Activated CD4-positive, alpha-beta memory T cell treated with anti-CD3 and anti-CD28 coated beads for 36 hours (primary cell): ENCODE measurements at regions of chr3 and their contacts with region 1.

Region 1: DNA sequence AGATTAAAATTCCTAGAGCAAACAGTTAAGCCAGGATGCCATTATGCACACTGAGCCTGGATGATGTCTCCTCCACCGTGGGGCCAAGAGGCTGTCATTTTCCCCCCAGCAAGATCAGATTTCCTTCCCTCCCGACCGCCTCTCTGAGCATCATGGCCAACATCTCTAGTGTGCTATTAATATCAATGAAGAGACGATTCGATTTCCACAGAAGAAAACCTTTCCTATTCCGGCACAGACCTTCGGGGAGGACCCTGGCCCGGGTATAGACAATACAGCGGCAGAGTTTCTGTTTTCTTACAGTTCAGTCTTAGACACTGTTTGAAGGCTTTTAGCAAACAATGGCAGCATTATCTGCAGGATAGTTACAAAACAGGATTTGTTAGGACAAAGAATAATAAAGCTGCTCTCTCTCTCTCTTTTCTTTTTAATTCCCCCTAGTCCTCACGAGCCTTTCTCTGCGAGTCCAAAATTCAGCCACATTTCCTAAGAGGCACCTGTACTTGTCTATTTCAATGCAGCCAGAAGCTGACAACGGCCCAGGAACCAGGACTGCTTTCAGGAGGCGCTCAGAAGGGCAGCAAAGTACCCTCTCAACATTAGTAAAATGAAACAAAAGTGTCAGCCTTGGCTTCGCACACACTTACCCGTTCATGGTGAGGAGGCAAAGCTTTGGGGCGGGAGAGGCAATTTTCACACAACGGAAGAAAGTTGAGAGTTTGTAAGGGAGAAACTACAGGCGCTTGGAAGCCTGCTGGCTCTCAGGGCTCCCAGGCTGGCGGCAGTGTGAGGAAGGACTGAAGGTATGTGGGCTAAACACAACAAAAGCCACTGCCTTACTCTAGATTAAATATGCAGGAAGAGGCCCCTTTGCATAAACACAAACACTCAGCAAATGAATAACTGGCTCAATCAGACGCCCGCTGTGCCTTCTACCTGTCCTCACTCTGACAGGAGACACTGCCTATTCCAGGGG is 278.0 kb downstream of the FOXP1 start:
- DNase-seq: peak; percentile 22
- H3K4me3 Mint-ChIP-seq: peak overlapping the region; percentile 77
- H3K27ac Mint-ChIP-seq: peak overlapping the region; percentile 87
- H3K4me1 Mint-ChIP-seq: peaks cover 86% of the 10 kb centered on the region
- H3K27me3 Mint-ChIP-seq: no peaks in the 10 kb centered on the region

Region 2: DNA sequence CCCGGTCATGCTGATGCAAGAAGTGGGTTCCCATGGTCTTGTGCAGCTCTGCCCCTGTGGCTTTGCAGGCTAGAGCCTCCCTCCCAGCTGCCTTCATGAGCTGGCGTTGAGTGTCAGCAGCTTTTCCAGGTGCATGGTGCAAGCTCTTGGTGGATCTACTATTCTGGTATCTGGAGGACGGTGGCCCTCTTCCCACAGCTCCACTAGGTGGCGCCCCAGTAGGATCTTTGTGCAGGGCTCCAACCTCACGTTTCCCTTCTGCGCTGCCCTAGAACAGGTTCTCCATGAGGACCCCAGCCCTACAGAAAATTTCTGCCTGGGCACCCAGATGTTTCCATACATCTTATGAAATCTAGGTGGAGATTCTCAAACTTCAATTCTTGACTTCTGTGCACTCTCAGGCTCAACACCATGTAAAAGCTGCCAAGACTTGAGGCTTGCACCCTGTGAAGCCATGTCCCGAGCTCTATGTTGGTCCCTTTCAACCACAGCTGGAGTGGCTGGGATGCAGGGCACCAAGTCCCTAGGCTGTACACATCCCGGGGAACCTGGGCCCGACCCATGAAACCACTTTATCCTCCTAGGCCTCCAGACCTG is 754.7 kb before region 1 on chr3:
- CTCF ChIA-PET with region 1: no interaction called
- POLR2A ChIA-PET with region 1: no interaction called
- intact Hi-C with region 1: loop called (anchors 2 kb)
- DNase-seq: peak; percentile 84
- H3K4me3 Mint-ChIP-seq: no peak overlapping the region
- H3K27ac Mint-ChIP-seq: no peak overlapping the region
- H3K4me1 Mint-ChIP-seq: no peaks in the 10 kb centered on the region
- H3K27me3 Mint-ChIP-seq: peaks cover 3% of the 10 kb centered on the region

Region 3: DNA sequence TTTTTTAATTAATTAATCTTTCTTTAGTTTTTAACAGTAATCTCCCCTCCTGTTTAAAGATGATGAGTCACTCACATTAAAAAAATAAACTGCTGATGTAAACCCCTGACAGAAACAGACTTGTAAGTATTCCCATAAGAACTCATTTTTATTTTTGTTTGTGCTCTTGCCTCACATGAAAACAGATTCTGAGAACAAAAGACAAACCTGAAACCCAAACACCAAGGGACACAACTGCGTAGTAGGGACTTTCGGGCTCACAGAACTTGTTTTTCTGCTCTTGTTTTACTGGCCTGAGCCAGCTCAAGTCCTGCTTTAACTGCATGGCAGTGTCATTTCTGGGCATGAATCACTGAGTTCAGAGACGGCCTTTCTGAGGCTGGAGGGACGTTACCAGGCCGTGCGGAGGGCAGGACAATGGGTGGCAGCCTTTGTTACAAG is 322.8 kb before region 1 on chr3:
- CTCF ChIA-PET with region 1: interaction called, 3 read pairs
- POLR2A ChIA-PET with region 1: no interaction called
- intact Hi-C with region 1: loop called (anchors 5 kb)
- DNase-seq: peak; percentile 70
- H3K4me3 Mint-ChIP-seq: peak overlapping the region; percentile 57
- H3K27ac Mint-ChIP-seq: peak overlapping the region; percentile 99
- H3K4me1 Mint-ChIP-seq: peaks cover 64% of the 10 kb centered on the region
- H3K27me3 Mint-ChIP-seq: no peaks in the 10 kb centered on the region

Region 4: GRCh38 chr3:71087143-71088018 is 218.1 kb before region 1 on chr3:
- CTCF ChIA-PET with region 1: interaction called, 3 read pairs
- POLR2A ChIA-PET with region 1: interaction called, 3 read pairs
- intact Hi-C with region 1: loop called (anchors 1 kb)
- DNase-seq: peak; percentile 62
- H3K4me3 Mint-ChIP-seq: peak overlapping the region; percentile 38
- H3K27ac Mint-ChIP-seq: peak overlapping the region; percentile 81
- H3K4me1 Mint-ChIP-seq: peaks cover 88% of the 10 kb centered on the region
- H3K27me3 Mint-ChIP-seq: no peaks in the 10 kb centered on the region

Region 5: DNA sequence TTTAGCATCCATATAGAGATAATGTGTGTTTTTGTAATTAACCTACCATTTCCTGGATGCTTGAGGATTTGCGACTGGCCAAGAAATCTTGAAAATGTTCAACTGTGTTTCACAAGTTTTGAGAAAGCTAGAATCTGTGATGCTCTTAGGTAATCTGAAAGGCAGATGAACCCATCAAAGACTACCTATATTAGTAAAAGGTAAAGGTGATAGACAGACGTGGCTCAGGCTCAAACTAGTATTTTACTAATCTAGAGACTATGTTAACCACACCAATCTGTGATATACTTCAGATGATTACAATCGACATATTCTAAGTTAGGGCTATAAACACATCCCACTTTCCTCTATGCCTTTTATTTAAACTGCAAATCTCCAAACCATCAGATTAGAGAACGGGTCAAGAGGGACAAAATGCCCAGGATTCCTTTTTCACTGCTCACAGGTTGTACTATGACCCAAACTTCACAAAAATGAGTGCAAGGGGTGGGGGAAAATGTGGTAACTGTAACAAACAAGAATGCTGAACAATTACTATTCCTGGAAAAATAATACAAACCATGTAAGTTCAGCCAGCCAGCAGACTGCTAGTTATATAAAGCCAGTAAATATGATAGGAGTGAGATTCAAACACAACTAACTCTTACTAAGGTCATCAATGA is 17.1 kb before region 1 on chr3:
- CTCF ChIA-PET with region 1: interaction called, 3 read pairs
- POLR2A ChIA-PET with region 1: no interaction called
- intact Hi-C with region 1: loop called (anchors 1 kb)
- DNase-seq: no peak
- H3K4me3 Mint-ChIP-seq: no peak overlapping the region
- H3K27ac Mint-ChIP-seq: no peak overlapping the region
- H3K4me1 Mint-ChIP-seq: peaks cover 43% of the 10 kb centered on the region
- H3K27me3 Mint-ChIP-seq: no peaks in the 10 kb centered on the region

Region 6: DNA sequence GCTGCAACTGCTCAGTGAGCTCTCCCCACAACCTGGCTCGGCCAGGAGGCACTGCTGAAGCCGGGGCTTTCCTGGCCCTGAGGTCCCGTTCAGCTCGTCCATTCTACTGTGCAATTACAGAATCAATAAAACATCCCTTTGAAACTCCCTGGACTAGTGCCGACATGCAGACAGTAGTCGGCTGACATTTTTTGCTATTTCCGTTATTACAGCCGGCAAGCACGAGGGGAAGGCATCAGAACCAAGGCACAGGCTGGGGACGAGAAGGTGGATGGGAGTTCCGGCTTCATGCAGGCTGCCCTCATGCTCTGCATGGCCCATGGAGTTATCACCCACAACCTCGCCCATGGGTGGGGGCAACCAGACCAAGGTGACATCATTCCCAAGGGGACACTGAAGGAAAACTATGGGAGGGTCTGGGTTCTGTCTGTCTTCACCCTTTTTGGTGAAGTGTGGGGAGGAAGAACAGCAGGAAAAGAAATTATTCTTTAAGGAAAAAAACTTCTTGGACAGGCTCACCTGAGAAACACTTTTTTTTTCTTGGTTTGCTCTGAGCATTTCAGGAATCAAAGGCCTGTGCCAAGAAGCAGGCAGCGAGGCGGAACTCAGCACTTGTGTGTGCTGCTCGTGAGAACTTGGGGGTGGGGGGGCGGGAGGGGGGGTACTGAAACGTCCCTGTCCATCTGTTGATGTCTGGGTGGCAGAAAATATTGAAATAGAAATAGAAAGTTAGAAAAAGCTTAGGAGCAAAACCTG is 123.5 kb after region 1 on chr3:
- CTCF ChIA-PET with region 1: no interaction called
- POLR2A ChIA-PET with region 1: no interaction called
- intact Hi-C with region 1: loop called (anchors 10 kb)
- DNase-seq: no peak
- H3K4me3 Mint-ChIP-seq: peak overlapping the region; percentile 24
- H3K27ac Mint-ChIP-seq: peak overlapping the region; percentile 61
- H3K4me1 Mint-ChIP-seq: peaks cover 90% of the 10 kb centered on the region
- H3K27me3 Mint-ChIP-seq: no peaks in the 10 kb centered on the region